Activated CD8-positive, alpha-beta memory T cell treated with anti-CD3 and anti-CD28 coated beads, Interleukin-2, amount 10 ng/mL, durations not matched to agents 7 days and 5 days (primary cell): ENCODE measurements at regions of chr19 and their contacts with region 1.

Region 1: DNA sequence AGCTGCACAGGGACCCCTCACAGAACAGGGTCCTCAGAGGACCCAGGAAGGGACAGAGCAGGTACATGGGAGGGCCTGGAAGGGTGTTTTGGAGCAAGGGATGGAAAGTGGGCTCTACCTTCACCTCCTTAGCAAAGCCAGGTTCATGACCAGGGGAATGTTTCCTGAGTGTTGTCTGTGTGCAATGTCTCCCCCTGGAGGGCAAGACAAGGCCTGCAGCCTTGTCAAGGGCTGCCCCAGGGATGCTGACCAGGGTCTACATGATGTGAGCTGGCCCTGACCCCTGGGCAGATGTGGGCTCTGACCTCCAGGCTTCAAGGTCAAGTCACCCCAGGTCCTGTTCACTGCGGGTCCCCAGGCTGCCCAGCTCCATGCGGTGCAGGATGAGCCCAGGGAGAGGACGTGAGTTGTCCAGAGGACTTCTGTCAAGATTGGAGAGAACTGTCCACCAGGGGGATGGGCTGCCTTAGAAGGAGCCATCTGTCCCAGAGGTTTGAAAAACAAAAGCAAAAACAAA is 1.0 kb upstream of the CEACAM1 start:
- DNase-seq: peak; percentile 83
- ATAC-seq: peak; percentile 81
- H3K4me3 Mint-ChIP-seq: peak overlapping the region; percentile 76
- H3K27ac Mint-ChIP-seq: peak overlapping the region; percentile 89
- H3K4me1 Mint-ChIP-seq: peaks cover 48% of the 10 kb centered on the region
- H3K27me3 Mint-ChIP-seq: peaks cover 4% of the 10 kb centered on the region

Region 2: GRCh38 chr19:42433503-42434260 is 95.6 kb before region 1 on chr19:
- CTCF ChIA-PET with region 1: interaction called, 36 read pairs
- DNase-seq: peak; percentile 79
- ATAC-seq: peak; percentile 75
- H3K4me3 Mint-ChIP-seq: no peak overlapping the region
- H3K27ac Mint-ChIP-seq: no peak overlapping the region
- H3K4me1 Mint-ChIP-seq: peaks cover 12% of the 10 kb centered on the region
- H3K27me3 Mint-ChIP-seq: peaks cover 5% of the 10 kb centered on the region

Region 3: DNA sequence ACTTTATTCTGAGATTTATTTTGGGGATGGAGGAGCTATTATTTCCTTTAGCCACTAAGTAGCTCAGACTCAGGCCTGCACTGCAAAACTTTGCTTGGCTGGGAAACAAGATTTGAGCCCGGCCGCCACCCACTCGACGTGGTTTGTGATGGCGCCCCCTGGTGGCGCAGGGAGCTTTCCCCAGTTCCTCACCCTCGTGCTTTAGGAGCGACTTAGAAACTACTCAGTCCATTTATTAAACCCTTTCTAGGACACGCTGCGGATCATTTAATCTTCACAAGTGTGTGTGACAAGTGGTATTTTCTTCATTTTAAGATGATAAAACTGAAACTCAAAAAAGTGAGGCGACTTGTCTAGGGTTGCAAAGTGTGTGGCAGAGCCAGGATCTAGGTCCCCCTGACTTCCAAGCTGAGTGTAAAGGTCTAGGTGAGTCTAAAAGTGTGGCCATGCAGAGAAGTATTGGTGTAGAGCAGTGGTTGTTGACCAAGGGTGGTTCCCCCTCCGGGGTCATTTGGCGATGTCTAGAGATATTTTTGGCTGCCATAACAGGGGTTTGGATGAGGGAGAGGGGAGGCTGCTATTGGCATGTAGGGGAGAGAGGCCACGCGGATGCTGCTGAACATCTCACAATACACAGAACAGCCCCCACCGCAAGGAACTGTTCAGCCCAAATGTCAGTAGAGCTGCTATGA is 88.8 kb before region 1 on chr19:
- CTCF ChIA-PET with region 1: interaction called, 68 read pairs
- DNase-seq: peak; percentile 86
- ATAC-seq: peak; percentile 69
- H3K4me3 Mint-ChIP-seq: peak overlapping the region; percentile 47
- H3K27ac Mint-ChIP-seq: peak overlapping the region; percentile 73
- H3K4me1 Mint-ChIP-seq: peaks cover 35% of the 10 kb centered on the region
- H3K27me3 Mint-ChIP-seq: no peaks in the 10 kb centered on the region

Region 4: GRCh38 chr19:42455621-42456081 is 73.7 kb before region 1 on chr19:
- CTCF ChIA-PET with region 1: interaction called, 186 read pairs
- DNase-seq: no peak
- ATAC-seq: no peak
- H3K4me3 Mint-ChIP-seq: no peak overlapping the region
- H3K27ac Mint-ChIP-seq: no peak overlapping the region
- H3K4me1 Mint-ChIP-seq: peaks cover 48% of the 10 kb centered on the region
- H3K27me3 Mint-ChIP-seq: peaks cover 2% of the 10 kb centered on the region

Region 5: DNA sequence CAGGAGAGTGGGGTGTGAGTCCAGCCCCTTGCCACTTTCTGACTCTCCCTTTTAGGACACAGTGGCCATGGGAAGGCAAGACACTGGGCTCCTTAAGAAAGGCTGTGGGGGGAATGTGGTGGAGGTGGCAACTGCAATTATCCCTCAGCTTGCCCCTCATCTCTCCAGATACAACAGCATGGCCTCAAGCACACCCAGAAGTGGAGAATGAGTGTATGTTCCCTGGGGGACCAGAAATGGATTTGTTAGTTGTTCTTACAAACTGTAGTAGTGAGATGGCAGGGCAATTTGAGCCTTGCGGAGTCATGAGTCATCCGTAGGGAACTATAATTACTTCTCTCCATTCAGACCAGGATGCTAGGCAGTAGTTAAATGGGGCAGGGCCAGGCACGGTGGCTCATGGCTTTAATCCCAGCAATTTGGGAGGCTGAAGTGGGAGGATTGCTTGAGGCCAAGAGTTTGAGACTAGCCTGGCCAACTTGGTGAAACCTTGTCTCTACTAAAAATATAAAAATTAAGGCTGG is 61.0 kb before region 1 on chr19:
- CTCF ChIA-PET with region 1: interaction called, 26 read pairs
- DNase-seq: no peak
- ATAC-seq: no peak
- H3K4me3 Mint-ChIP-seq: no peak overlapping the region
- H3K27ac Mint-ChIP-seq: no peak overlapping the region
- H3K4me1 Mint-ChIP-seq: peaks cover 37% of the 10 kb centered on the region
- H3K27me3 Mint-ChIP-seq: peaks cover 8% of the 10 kb centered on the region

Region 6: GRCh38 chr19:42497492-42498168 is 31.7 kb before region 1 on chr19:
- CTCF ChIA-PET with region 1: interaction called, 11 read pairs
- DNase-seq: no peak
- ATAC-seq: no peak
- H3K4me3 Mint-ChIP-seq: no peak overlapping the region
- H3K27ac Mint-ChIP-seq: peak overlapping the region; percentile 39
- H3K4me1 Mint-ChIP-seq: peaks cover 57% of the 10 kb centered on the region
- H3K27me3 Mint-ChIP-seq: no peaks in the 10 kb centered on the region

Region 7: DNA sequence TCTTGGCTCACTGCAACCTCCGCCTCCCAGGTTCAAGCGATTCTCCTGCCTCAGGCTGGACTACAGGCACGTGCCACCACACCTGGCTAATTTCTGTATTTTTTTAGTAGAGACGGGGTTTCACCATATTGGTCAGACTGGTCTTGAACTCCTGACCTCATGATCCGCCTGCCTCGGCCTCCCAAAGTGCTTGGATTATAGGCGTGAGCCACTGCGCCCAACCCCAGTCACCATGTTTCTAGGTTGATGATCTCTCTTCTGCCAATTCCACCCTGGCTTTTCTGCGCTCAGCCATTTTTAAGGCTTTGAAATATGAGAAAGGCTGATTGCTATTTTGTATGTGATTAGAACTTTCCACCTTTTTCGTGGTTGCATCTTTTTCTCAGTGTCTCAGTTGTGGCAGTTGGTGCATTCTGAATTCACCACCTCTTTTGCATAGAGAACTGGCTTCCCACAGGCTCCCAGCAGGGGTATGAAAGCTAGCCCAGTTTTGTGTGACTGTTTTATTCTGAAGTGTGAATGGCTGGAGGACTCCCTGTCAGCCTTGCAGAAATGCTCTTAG is 16.5 kb before region 1 on chr19:
- CTCF ChIA-PET with region 1: interaction called, 23 read pairs
- DNase-seq: peak; percentile 5
- ATAC-seq: no peak
- H3K4me3 Mint-ChIP-seq: no peak overlapping the region
- H3K27ac Mint-ChIP-seq: peak overlapping the region; percentile 54
- H3K4me1 Mint-ChIP-seq: peaks cover 46% of the 10 kb centered on the region
- H3K27me3 Mint-ChIP-seq: no peaks in the 10 kb centered on the region